T-cell (primary cell): ENCODE measurements at regions of chr2 and their contacts with region 1.

Region 1: DNA sequence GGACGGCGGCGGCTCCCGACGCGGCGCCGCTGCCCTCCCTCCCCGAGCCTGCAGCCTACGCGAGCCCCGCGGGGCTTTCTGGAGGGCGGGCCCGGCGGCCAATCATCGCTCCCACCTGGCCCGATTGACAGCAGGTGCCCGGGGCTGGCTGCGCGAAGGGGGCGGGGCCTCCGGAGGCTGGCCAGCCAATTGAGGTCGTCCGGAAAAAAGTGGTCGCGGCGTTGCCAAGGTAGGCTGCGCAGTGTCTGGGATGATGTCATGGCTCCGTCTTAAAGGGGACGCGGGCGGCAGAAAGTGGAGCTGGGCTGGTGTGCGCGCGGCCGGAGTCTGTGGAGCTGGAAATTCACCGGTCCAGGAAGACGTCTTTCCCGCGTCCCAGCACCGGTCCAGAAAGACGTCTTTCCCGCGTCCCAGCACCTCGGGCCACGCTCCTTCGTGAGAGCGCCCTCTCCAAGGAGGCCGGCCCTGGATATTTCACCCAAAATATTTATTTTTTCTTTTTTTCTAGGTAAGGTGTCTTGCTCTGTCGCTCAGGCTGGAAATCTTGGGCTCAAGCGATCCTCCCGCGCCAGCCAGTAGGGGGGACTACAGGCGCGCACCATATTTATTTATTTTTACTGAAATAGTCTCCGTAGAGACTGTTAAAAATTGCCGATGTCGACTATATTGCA is at the start of gene ACTR1B:
- DNase-seq: peak; percentile 89 to 99 (median 97)
- ATAC-seq: peak; percentile 88 to 95 (median 92)
- H3K4me3 ChIP-seq: peak within 1 kb of the TSS; percentile 67 to 92
- H3K4me3 Mint-ChIP-seq: peak within 1 kb of the TSS; percentile 90 to 95 (median 95)
- H3K27ac ChIP-seq: peak within 1 kb of the TSS; percentile 96
- H3K27ac Mint-ChIP-seq: peak within 1 kb of the TSS; percentile 95 to 98
- H3K4me1 ChIP-seq: peaks cover 6 to 40% of the 10 kb centered on the region in 2 experiments
- H3K4me1 Mint-ChIP-seq: peaks cover 32 to 35% (median 32%) of the 10 kb centered on the region in 3 donors
- H3K27me3 ChIP-seq: no peaks in the 10 kb centered on the region
- H3K27me3 Mint-ChIP-seq: no peaks in the 10 kb centered on the region
- total RNA-seq, gene ACTR1B: 86.3 to 124 (median 101) TPM

Region 2: GRCh38 chr2:97067279-97068004 is 596.7 kb before region 1 on chr2:
- CTCF ChIA-PET with region 1: no interaction called
- POLR2A ChIA-PET with region 1: no interaction called
- DNase-seq: no peak
- ATAC-seq: no peak
- H3K4me3 ChIP-seq: no peak overlapping the region
- H3K4me3 Mint-ChIP-seq: no peak overlapping the region
- H3K27ac ChIP-seq: no peak overlapping the region
- H3K27ac Mint-ChIP-seq: no peak overlapping the region
- H3K4me1 ChIP-seq: no peaks in the 10 kb centered on the region
- H3K4me1 Mint-ChIP-seq: no peaks in the 10 kb centered on the region
- H3K27me3 ChIP-seq: peaks cover 2 to 8% of the 10 kb centered on the region in 2 experiments
- H3K27me3 Mint-ChIP-seq: peaks cover 8 to 10% of the 10 kb centered on the region in 2 donors

Region 3: DNA sequence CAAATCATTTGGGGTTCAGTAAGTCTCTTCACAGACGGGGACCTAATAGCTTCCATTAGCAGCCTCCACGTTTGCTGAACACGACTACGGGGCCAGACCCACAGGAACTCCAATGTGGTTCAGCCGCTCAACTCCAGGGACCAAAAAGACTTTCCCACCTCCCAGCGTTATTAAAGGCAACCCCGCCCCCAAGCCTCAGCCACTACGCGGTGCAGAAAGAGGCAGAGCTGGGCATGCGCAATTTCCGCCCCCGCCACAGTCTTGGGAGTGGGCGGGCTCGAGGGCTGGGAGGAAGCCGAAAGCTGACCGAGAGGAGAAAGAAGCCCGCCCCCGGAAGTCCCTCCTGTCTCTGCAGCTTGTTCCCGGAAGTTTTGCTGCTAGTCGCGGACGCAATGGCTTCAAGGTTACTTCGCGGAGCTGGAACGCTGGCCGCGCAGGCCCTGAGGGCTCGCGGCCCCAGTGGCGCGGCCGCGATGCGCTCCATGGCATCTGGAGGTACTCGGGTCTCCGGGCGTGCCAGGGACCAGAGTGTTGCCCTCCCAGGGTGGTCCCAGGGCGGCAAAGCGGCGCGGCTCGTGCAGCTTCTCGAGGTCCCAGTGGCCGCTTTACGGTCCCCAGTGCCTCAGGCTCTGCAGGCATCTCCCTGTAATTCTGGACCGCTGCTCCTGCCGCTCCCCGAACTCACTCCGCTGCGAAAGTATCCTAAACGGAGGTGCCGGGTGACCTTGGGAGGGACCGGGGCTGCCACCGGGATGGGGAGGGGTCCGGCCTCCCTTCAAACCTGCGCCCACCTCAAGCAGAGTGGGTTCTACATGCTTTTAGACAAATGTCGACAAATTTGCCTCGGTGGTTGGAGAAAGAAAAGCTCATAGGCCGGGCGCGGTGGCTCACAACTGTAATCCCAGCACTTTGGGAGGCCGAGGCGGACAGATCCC is 18.1 kb before region 1 on chr2 and contains the start of gene COX5B:
- CTCF ChIA-PET with region 1: interaction called in 1 of 2 experiments, 38 read pairs
- POLR2A ChIA-PET with region 1: interaction called, 4 to 45 read pairs
- DNase-seq: peak; percentile 94 to 99 (median 98)
- ATAC-seq: peak; percentile 96 to 99 (median 98)
- H3K4me3 ChIP-seq: peak within 1 kb of the TSS; percentile 81 to 93
- H3K4me3 Mint-ChIP-seq: peak within 1 kb of the TSS; percentile 90 to 93 (median 93)
- H3K27ac ChIP-seq: peak within 1 kb of the TSS; percentile 76
- H3K27ac Mint-ChIP-seq: peak within 1 kb of the TSS; percentile 98
- H3K4me1 ChIP-seq: peaks cover 5 to 24% of the 10 kb centered on the region in 2 experiments
- H3K4me1 Mint-ChIP-seq: peaks cover 20 to 33% (median 24%) of the 10 kb centered on the region in 3 donors
- H3K27me3 ChIP-seq: no peaks in the 10 kb centered on the region
- H3K27me3 Mint-ChIP-seq: no peaks in the 10 kb centered on the region
- total RNA-seq, gene COX5B: 108 to 142 (median 119) TPM

Region 4: DNA sequence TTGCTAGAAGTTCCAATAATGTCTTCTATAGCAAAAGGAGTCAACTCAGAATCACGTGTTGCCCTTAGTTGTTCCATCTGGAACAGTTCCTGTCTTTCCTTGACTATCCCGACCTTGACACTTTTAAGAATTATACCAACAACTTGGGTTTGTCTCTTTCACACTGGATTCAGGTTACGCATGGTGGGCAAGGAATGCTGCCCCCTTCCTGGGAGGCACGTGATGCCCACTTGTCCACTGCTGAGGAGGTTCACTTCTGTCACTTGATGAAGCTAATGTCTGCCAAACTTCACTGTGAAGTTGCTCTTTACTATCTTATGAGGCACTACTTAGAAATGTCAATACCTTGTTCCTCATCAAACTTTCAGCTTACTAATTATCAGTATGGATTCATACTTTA is 13.0 kb before region 1 on chr2:
- CTCF ChIA-PET with region 1: interaction called, 4 to 38 read pairs
- POLR2A ChIA-PET with region 1: interaction called, 4 to 45 read pairs
- DNase-seq: no peak
- ATAC-seq: no peak
- H3K4me3 ChIP-seq: no peak overlapping the region
- H3K4me3 Mint-ChIP-seq: no peak overlapping the region
- H3K27ac ChIP-seq: no peak overlapping the region
- H3K27ac Mint-ChIP-seq: peak overlapping the region in 1 of 2 donors; percentile 57
- H3K4me1 ChIP-seq: peaks cover 5 to 14% of the 10 kb centered on the region in 2 experiments
- H3K4me1 Mint-ChIP-seq: peaks cover 12 to 23% (median 15%) of the 10 kb centered on the region in 3 donors
- H3K27me3 ChIP-seq: no peaks in the 10 kb centered on the region
- H3K27me3 Mint-ChIP-seq: no peaks in the 10 kb centered on the region

Region 5: GRCh38 chr2:97718051-97718882 is 54.2 kb after region 1 on chr2:
- CTCF ChIA-PET with region 1: no interaction called
- POLR2A ChIA-PET with region 1: no interaction called
- DNase-seq: peak; percentile 58 to 85 (median 72)
- ATAC-seq: peak; percentile 87 to 91 (median 90)
- H3K4me3 ChIP-seq: peak overlapping the region; percentile 65 to 91
- H3K4me3 Mint-ChIP-seq: peak overlapping the region; percentile 85 to 98 (median 93)
- H3K27ac ChIP-seq: peak overlapping the region; percentile 89
- H3K27ac Mint-ChIP-seq: peak overlapping the region; percentile 100
- H3K4me1 ChIP-seq: peaks cover 55 to 93% of the 10 kb centered on the region in 2 experiments
- H3K4me1 Mint-ChIP-seq: peaks cover 81 to 92% (median 90%) of the 10 kb centered on the region in 3 donors
- H3K27me3 ChIP-seq: no peaks in the 10 kb centered on the region
- H3K27me3 Mint-ChIP-seq: no peaks in the 10 kb centered on the region

Region 6: GRCh38 chr2:97763176-97763845 is 99.2 kb after region 1 on chr2:
- CTCF ChIA-PET with region 1: no interaction called
- POLR2A ChIA-PET with region 1: no interaction called
- DNase-seq: no peak
- ATAC-seq: no peak
- H3K4me3 ChIP-seq: no peak overlapping the region
- H3K4me3 Mint-ChIP-seq: no peak overlapping the region
- H3K27ac ChIP-seq: no peak overlapping the region
- H3K27ac Mint-ChIP-seq: peak overlapping the region; percentile 55
- H3K4me1 ChIP-seq: peaks cover 0 to 36% of the 10 kb centered on the region in 2 experiments
- H3K4me1 Mint-ChIP-seq: peaks cover 22 to 39% (median 36%) of the 10 kb centered on the region in 3 donors
- H3K27me3 ChIP-seq: no peaks in the 10 kb centered on the region
- H3K27me3 Mint-ChIP-seq: no peaks in the 10 kb centered on the region